ENCODE measurements at regions of chr5 and their contacts with region 1.

Region 1: DNA sequence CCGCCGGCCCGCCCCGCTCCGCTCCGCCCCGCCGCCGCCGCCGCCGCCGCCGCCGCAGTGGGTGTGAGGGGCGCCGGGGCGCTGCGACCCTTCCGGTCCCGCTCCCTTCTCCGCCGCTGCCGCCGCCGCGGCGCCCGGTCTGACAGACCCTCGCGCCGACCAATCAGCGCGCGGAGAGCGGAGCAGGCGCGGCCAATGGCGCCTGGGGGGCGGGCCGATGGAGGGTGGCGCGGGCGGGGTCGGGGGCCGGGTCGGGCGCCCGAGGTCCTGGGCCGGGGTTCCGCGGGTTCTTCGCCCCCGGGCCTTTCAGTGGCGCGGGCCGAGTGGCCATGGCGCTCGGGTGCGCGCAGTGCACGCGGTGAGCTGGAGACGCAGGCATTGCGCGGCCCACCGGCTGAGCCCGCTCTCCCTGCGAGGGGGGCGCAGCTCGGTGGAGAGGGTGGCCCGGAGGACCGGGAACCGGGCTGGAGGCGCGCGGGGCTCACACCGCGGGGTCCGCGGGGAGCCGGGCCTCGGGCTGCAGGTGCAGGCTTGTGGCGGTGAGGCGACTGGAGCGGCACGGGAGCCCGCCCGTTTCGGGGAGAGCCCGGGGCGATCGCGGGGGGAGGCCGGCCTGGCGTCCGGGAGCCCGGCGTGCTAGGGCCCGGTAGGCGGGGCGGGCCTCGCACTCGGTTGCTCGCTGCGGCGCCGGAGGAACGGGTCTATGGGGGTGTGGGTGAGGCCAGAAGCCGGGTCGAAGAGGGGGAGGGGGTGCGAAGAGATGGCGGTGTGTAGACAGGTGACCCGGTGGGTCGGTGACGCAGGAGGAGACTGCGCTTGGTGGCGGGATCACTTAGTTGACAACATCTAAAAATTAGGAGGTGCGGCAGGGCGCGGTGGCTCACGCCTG is at the start of gene MAPK9:
- DNase-seq: peak; percentile 76 to 77
- ATAC-seq: peak; percentile 82 to 83
- H3K4me3 ChIP-seq: peak within 1 kb of the TSS; percentile 74
- H3K27ac ChIP-seq: peak within 1 kb of the TSS; percentile 85 to 97
- H3K4me1 ChIP-seq: peaks cover 18% of the 10 kb centered on the region
- CTCF ChIP-seq: no peak; the same call in 2 of the 3 replicates
- EP300 ChIP-seq: no peak
- POLR2A ChIP-seq: peak; percentile 71
- RAD21 ChIP-seq: no peak
- polyA plus RNA-seq, gene MAPK9: 52.7 and 66.9 TPM in 2 replicates

Region 2: DNA sequence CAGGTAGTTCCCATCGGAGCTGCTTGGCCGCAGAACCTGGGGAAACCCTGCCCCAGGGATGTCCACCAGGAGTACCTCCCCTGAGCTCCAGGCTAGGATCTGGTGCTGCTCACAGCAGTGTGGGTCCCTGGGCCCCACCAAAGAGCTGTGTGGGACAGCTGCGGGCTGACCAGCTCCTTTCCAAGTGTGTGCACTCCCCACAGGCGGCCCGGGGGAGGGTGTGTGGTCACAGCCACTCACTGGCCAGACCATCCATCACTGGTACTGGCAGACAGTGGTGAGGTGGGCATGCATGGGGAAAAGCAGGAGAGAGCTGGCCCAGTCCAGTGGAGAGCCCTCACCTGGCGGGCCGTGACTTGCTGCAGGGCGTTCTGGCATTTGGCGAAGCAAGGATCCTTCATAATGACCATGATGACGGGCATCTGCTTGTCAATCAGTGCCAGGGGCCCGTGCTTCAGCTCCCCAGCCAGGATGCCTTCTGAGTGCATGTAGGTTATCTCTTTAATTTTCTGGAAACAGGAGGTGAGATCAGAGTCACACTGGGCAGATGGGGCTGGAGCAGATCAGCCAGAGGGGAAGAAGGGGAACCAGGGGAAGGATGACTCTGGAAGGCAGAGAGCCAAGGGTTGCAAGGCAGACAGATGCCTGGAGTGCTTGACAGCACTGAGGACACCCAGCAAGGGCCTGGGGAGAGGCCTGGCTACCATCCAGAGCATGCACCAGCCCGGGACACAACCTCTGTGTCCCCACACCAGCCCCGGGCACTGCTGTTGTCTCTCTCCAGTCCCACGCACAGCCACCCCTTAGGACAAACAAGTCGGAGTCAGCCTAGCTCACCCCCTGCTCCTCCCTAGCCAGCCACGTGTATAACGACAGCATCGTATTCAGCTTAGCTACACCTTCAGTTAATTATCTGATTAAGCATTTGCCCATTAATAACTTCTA is 12.5 kb after region 1 on chr5:
- CTCF ChIA-PET with region 1: interaction called, 81 read pairs
- POLR2A ChIA-PET with region 1: no interaction called
- DNase-seq: no peak
- ATAC-seq: no peak; a peak in 1 of 6 replicates
- H3K4me3 ChIP-seq: no peak overlapping the region
- H3K27ac ChIP-seq: no peak overlapping the region
- H3K4me1 ChIP-seq: no peaks in the 10 kb centered on the region
- CTCF ChIP-seq: no peak
- EP300 ChIP-seq: no peak
- POLR2A ChIP-seq: no peak
- RAD21 ChIP-seq: no peak

Region 3: GRCh38 chr5:180315762-180316212 is 23.6 kb after region 1 on chr5:
- CTCF ChIA-PET with region 1: interaction called, 250 read pairs
- POLR2A ChIA-PET with region 1: no interaction called
- DNase-seq: peak; percentile 54 to 67
- ATAC-seq: peak; percentile 85 to 95
- H3K4me3 ChIP-seq: no peak overlapping the region
- H3K27ac ChIP-seq: no peak overlapping the region
- H3K4me1 ChIP-seq: no peaks in the 10 kb centered on the region
- CTCF ChIP-seq: peak; percentile 78
- EP300 ChIP-seq: no peak
- POLR2A ChIP-seq: no peak
- RAD21 ChIP-seq: peak; percentile 56 to 66

Region 4: DNA sequence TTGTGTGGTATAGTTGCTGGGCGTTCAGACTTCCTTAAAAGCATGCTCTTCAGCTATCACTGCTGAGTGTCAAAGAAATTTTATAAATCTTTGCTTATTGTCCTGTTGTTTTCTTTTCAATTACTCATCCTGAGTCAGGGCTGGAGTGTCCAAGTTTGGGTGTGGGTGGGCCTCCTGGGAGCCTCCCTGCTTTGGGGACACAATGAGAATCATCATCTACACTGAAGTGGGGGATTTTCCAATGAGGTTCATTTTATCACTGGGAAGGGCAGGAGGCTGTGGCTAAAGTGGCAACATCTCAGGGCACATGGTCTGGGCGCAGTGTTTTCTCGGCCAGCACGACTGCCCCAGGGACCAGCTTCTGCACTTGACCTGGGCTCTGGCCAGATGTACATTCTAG is 41.5 kb after region 1 on chr5:
- CTCF ChIA-PET with region 1: interaction called, 250 read pairs
- POLR2A ChIA-PET with region 1: interaction called, 4 read pairs
- DNase-seq: peak; percentile 81 to 85
- ATAC-seq: peak in 1 of 2 experiments; percentile 47; a peak in 3 of 6 replicates
- H3K4me3 ChIP-seq: no peak overlapping the region
- H3K27ac ChIP-seq: peak overlapping the region; percentile 82 to 87
- H3K4me1 ChIP-seq: peaks cover 58% of the 10 kb centered on the region
- CTCF ChIP-seq: no peak
- EP300 ChIP-seq: peak; percentile 47 to 54; a peak in 2 of 5 replicates
- POLR2A ChIP-seq: no peak
- RAD21 ChIP-seq: peak in 1 of 2 experiments; percentile 5; a peak in 1 of 5 replicates

Region 5: GRCh38 chr5:180343831-180344327 is 51.7 kb after region 1 on chr5:
- CTCF ChIA-PET with region 1: interaction called, 13 read pairs
- POLR2A ChIA-PET with region 1: no interaction called
- DNase-seq: peak in 1 of 2 experiments; percentile 41
- ATAC-seq: peak; percentile 37 to 54; a peak in 3 of 6 replicates
- H3K4me3 ChIP-seq: no peak overlapping the region
- H3K27ac ChIP-seq: peak overlapping the region; percentile 37 to 71; a peak in 4 of 6 replicates
- H3K4me1 ChIP-seq: peaks cover 35% of the 10 kb centered on the region
- CTCF ChIP-seq: no peak
- EP300 ChIP-seq: no peak
- POLR2A ChIP-seq: no peak
- RAD21 ChIP-seq: no peak

Region 6: DNA sequence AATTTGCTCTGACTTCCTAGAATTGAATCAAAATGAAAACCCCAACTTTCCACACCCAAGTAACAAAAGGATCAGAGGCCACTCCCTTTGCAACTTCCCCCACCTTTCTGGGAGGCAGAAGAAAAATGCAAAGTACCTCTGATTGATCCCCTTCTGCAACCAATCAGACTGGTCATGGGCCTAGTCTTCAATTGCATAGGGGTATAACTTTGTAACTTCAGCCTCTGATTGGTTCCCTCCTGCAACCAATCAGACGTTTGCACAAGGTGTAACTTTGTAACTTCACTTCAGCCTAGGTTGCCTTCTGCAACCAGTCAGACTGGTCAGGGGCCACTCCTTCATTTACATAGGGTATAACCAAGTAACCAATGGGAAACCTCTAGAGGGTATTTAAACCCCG is 163.7 kb after region 1 on chr5:
- CTCF ChIA-PET with region 1: interaction called, 12 read pairs
- POLR2A ChIA-PET with region 1: no interaction called
- DNase-seq: no peak
- ATAC-seq: no peak
- H3K4me3 ChIP-seq: no peak overlapping the region
- H3K27ac ChIP-seq: no peak overlapping the region
- H3K4me1 ChIP-seq: no peaks in the 10 kb centered on the region
- CTCF ChIP-seq: no peak
- EP300 ChIP-seq: no peak
- POLR2A ChIP-seq: no peak
- RAD21 ChIP-seq: no peak

Region 7: DNA sequence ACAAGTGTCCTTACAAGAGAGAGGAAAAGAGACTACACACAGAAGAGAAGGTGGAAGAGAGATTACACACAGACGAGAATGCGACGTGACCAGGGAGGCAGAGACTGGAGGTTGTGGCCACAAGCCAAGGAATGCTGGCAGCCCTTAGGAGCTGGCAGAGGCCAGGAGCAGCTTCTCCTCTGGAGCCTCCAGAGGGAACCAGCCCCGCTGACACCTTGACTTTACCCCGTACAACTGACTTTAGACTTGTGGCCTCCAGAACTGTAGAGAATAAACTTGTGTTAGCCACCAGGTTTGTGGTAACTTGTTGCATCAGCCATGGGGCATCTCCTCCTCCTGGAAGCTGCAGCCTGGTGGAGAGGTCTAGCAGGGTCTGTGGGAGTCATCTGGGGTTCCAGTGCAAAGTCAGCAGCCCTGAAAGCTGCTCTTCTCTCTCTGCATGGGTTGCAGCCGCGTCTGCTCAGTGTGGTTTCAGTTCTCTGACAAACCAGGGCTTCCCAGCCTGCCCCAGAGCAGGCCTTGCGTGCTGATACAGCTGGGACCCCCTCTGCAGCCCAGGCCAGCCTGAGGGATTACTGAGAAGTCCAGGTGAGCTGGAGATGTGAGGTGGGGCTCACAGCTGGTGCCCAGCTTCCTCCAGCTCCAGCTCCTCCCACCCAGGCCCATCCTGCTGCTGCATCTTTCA is 171.2 kb after region 1 on chr5:
- CTCF ChIA-PET with region 1: interaction called, 344 read pairs
- POLR2A ChIA-PET with region 1: interaction called, 3 read pairs
- DNase-seq: no peak
- ATAC-seq: no peak
- H3K4me3 ChIP-seq: no peak overlapping the region
- H3K27ac ChIP-seq: peak overlapping the region in 1 of 2 experiments; percentile 93; a peak in 3 of 6 replicates
- H3K4me1 ChIP-seq: peaks cover 32% of the 10 kb centered on the region
- CTCF ChIP-seq: no peak
- EP300 ChIP-seq: no peak
- POLR2A ChIP-seq: no peak
- RAD21 ChIP-seq: no peak